Activated naive CD4-positive, alpha-beta T cell treated with anti-CD3 and anti-CD28 coated beads for 36 hours (primary cell): ENCODE measurements at regions of chr3 and their contacts with region 1.

Region 1: DNA sequence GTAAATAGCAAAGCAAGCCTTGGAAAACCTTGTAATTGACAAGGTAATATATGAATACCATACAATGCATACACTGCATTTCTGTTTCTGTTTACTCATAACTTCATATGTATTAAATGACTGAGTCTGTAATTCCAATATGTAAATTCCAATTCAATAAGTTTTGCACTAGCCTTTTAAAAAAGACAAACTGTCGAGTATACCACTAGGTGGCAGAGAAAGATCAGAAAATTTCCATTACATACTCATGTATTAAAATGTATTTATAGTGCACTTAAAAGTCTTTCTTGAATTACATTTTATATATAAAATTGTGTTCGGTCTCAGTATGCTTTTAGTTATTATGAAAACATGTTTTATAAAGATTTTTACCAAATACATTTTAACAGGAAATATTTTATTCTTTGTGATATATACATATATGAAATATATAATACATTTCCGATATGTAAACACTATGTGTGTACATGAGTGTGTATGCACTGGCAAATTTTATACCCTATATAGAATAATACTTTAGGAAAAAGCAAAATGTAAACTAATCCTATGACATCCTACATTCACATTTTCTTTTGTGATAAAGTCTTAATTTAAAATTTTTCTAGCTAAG is 216.8 kb downstream of the VGLL3 start:
- DNase-seq: no peak
- H3K4me3 Mint-ChIP-seq: no peak overlapping the region
- H3K27ac Mint-ChIP-seq: no peak overlapping the region
- H3K4me1 Mint-ChIP-seq: no peaks in the 10 kb centered on the region
- H3K27me3 Mint-ChIP-seq: no peaks in the 10 kb centered on the region

Region 2: DNA sequence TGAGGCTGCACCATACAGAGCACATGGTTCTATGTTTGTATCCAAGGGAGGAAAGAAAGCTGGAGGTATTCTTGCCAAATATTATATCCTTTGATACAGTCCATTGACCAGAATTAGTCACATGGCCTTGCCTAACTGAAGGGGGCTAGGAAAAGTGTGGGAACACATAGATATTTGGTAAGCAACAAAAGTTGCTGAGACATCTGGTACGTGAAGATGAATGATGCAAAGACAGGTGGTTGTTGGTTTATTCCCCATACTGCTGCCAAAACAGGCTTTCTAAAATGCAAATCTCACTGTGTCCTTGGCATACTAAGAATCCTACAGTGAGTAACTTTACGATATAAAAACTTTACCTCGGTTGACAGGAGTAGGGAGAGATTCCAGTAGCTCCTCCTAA is 54.6 kb after region 1 on chr3:
- CTCF ChIA-PET with region 1: no interaction called
- intact Hi-C with region 1: no loop called
- DNase-seq: no peak
- H3K4me3 Mint-ChIP-seq: no peak overlapping the region
- H3K27ac Mint-ChIP-seq: no peak overlapping the region
- H3K4me1 Mint-ChIP-seq: no peaks in the 10 kb centered on the region
- H3K27me3 Mint-ChIP-seq: no peaks in the 10 kb centered on the region

Region 3: DNA sequence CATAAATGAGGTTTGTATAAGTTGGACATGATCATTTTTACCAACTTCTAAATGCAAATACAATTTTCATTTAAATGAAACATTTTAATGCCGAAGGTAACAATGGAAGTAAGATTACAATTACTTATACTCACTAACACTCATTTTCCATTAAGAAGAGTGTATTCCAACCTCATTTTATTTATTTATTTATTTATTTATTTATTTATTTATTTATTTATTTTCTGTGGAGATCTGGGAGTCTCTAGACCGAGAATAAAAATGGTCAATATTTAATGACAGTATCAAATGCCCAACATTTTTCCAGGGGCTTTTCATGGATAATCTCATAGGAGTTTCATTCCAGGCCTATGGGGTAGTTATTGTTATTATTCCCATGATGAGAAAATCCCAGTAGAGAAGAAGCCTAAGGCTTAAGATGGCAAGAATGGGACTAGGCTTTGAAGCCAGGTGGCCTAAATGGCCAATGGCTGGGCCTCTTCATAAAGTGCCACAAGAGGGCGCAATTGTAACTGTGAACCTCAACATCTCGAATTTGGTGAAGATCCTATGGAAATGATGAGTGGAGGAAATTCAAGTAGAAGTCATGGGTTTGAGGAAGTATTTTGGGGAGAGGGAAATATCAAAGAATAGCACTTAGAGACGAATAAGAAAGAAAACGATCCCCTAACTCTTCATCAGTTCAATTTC is 195.5 kb after region 1 on chr3:
- CTCF ChIA-PET with region 1: no interaction called
- intact Hi-C with region 1: loop called (anchors 5 kb)
- DNase-seq: peak; percentile 52
- H3K4me3 Mint-ChIP-seq: no peak overlapping the region
- H3K27ac Mint-ChIP-seq: no peak overlapping the region
- H3K4me1 Mint-ChIP-seq: no peaks in the 10 kb centered on the region
- H3K27me3 Mint-ChIP-seq: peaks cover 2% of the 10 kb centered on the region

Region 4: GRCh38 chr3:87082796-87083440 is 308.7 kb after region 1 on chr3:
- CTCF ChIA-PET with region 1: no interaction called
- intact Hi-C with region 1: loop called (anchors 1 kb)
- DNase-seq: no peak
- H3K4me3 Mint-ChIP-seq: no peak overlapping the region
- H3K27ac Mint-ChIP-seq: no peak overlapping the region
- H3K4me1 Mint-ChIP-seq: peaks cover 6% of the 10 kb centered on the region
- H3K27me3 Mint-ChIP-seq: no peaks in the 10 kb centered on the region

Region 5: DNA sequence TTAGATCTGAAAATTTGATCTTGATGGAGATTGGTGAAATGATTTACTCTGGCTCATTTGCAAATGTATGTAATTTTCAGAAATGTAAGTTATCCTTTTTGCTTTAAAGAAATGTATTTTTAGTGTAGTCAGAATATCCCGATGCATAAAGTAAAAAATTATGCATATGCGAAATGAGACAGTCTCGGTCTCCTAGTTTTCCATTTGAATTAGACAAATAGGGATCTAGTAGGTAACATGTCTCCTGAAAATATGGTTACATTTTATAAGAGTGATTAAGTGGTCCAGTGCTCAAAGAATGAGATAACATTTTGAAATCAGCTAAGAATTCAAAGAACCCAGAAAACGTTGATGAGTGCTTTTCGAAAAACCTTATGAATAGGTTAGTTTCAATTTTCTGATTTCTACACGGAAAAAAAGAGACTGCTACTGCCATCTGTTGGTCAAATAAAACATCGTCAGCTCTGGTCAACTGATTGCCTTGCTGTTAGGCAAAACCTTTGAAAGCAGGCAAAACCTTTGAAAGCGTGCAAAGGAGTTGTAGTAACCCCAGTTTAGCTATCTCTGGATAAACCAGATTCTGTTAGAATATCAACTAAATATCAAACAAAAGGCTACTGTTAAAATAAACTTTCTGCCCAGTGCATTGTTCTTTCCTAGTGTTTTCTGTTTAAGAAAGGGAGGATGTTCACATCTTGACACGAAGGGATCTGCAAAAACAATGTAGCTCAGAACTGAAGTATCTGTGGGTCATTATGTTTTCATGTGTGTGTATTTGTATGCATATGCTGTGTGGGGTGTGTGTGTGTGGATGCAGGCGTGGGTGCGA is 393.7 kb after region 1 on chr3:
- CTCF ChIA-PET with region 1: interaction called, 6 read pairs
- intact Hi-C with region 1: loop called (anchors 1 kb)
- DNase-seq: peak; percentile 55
- H3K4me3 Mint-ChIP-seq: no peak overlapping the region
- H3K27ac Mint-ChIP-seq: no peak overlapping the region
- H3K4me1 Mint-ChIP-seq: peaks cover 4% of the 10 kb centered on the region
- H3K27me3 Mint-ChIP-seq: peaks cover 20% of the 10 kb centered on the region

Region 6: GRCh38 chr3:87503900-87504508 is 729.8 kb after region 1 on chr3:
- CTCF ChIA-PET with region 1: no interaction called
- intact Hi-C with region 1: loop called (anchors 10 kb)
- DNase-seq: peak; percentile 22
- H3K4me3 Mint-ChIP-seq: no peak overlapping the region
- H3K27ac Mint-ChIP-seq: no peak overlapping the region
- H3K4me1 Mint-ChIP-seq: no peaks in the 10 kb centered on the region
- H3K27me3 Mint-ChIP-seq: no peaks in the 10 kb centered on the region